K562 (cell line): ENCODE measurements at regions of chr1 and their contacts with region 1.

Region 1: GRCh38 chr1:109112652-109113285 is 1.1 kb upstream of the ELAPOR1 start:
- DNase-seq: peak; percentile 93 to 97 (median 96)
- ATAC-seq: peak; percentile 98
- H3K4me3 ChIP-seq: no peak overlapping the region
- H3K27ac ChIP-seq: no peak overlapping the region
- H3K4me1 ChIP-seq: peaks cover 10 to 20% of the 10 kb centered on the region in 2 experiments; a peak in 4 of 5 replicates
- H3K27me3 ChIP-seq: peaks cover 0 to 6% of the 10 kb centered on the region in 2 experiments; a peak in 1 of 5 replicates
- CTCF ChIP-seq: peak; percentile 96 to 99 (median 97)
- EP300 ChIP-seq: no peak
- POLR2A ChIP-seq: no peak
- RAD21 ChIP-seq: peak; percentile 78 to 88

Region 2: DNA sequence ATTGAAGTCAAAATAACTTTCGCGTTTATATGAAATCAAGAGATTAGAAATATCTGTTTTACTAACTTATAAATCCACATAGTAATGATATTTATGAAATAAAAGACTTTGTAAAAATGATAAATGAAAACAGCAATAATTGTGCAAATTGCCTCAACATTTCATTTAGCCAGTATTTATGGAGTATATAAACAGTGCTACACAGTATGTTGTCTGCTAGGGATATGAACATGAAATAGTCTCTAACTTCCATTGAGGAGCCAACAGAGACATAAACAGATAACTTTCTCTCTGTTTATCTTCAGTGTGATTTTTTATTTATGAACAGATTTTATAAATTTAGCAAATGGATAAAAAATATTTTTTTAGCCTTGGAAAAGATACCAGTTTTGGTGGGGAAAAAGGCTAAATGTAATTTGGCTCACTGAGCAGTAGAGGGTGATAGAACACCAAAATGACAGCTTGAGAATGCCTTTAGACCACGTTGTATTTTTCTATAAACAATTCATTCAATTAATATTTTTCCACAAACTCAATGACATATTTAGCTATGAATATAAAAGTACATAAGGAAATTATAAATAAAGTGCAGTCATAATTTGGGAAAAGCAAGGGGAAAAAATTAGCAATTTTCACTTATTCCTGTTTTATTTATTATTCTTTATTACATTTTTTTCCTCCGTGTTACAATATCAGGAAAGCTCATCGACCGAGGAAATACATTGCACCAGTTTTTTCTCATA is 600.4 kb before region 1 on chr1:
- CTCF ChIA-PET with region 1: interaction called, 9 read pairs
- POLR2A ChIA-PET with region 1: no interaction called
- in situ Hi-C with region 1: no loop called
- intact Hi-C with region 1: loop called (anchors 5 kb)
- DNase-seq: peak; percentile 31 to 68 (median 48)
- ATAC-seq: peak; percentile 87
- H3K4me3 ChIP-seq: no peak overlapping the region
- H3K27ac ChIP-seq: no peak overlapping the region
- H3K4me1 ChIP-seq: no peaks in the 10 kb centered on the region
- H3K27me3 ChIP-seq: no peaks in the 10 kb centered on the region
- CTCF ChIP-seq: peak; percentile 77 to 99 (median 81)
- EP300 ChIP-seq: no peak
- POLR2A ChIP-seq: no peak
- RAD21 ChIP-seq: peak; percentile 100

Region 3: GRCh38 chr1:108897865-108898720 is 214.7 kb before region 1 on chr1:
- CTCF ChIA-PET with region 1: interaction called, 8 read pairs
- POLR2A ChIA-PET with region 1: interaction called, 3 read pairs
- in situ Hi-C with region 1: no loop called
- intact Hi-C with region 1: loop called (anchors 2 kb)
- DNase-seq: peak in 2 of 4 experiments; percentile 56 to 72
- ATAC-seq: peak; percentile 91
- H3K4me3 ChIP-seq: no peak overlapping the region
- H3K27ac ChIP-seq: no peak overlapping the region
- H3K4me1 ChIP-seq: no peaks in the 10 kb centered on the region
- H3K27me3 ChIP-seq: no peaks in the 10 kb centered on the region
- CTCF ChIP-seq: peak; percentile 61 to 94 (median 67); a peak in 5 of 6 replicates
- EP300 ChIP-seq: no peak
- POLR2A ChIP-seq: no peak
- RAD21 ChIP-seq: peak; percentile 89 to 96

Region 4: GRCh38 chr1:108925920-108926319 is 186.8 kb before region 1 on chr1:
- CTCF ChIA-PET with region 1: no interaction called
- POLR2A ChIA-PET with region 1: no interaction called
- in situ Hi-C with region 1: no loop called
- intact Hi-C with region 1: no loop called
- DNase-seq: no peak
- ATAC-seq: no peak
- H3K4me3 ChIP-seq: no peak overlapping the region
- H3K27ac ChIP-seq: no peak overlapping the region
- H3K4me1 ChIP-seq: no peaks in the 10 kb centered on the region
- H3K27me3 ChIP-seq: no peaks in the 10 kb centered on the region
- CTCF ChIP-seq: no peak
- EP300 ChIP-seq: no peak
- POLR2A ChIP-seq: no peak
- RAD21 ChIP-seq: no peak

Region 5: GRCh38 chr1:109041621-109042468 is 70.9 kb before region 1 on chr1 and contains the start of gene WDR47:
- CTCF ChIA-PET with region 1: interaction called, 3 read pairs
- POLR2A ChIA-PET with region 1: no interaction called
- in situ Hi-C with region 1: no loop called
- intact Hi-C with region 1: loop called (anchors 5 kb)
- DNase-seq: peak; percentile 99
- ATAC-seq: peak; percentile 99
- H3K4me3 ChIP-seq: peak within 1 kb of the TSS; percentile 87
- H3K27ac ChIP-seq: peak within 1 kb of the TSS; percentile 63
- H3K4me1 ChIP-seq: peaks cover 8 to 12% of the 10 kb centered on the region in 2 experiments; a peak in 4 of 5 replicates
- H3K27me3 ChIP-seq: no peaks in the 10 kb centered on the region
- CTCF ChIP-seq: no peak
- EP300 ChIP-seq: no peak
- POLR2A ChIP-seq: peak; percentile 87
- RAD21 ChIP-seq: no peak
- polyA plus RNA-seq, gene WDR47: 1.3 to 2.0 TPM

Region 6: GRCh38 chr1:109193653-109194590 is 81.2 kb after region 1 on chr1:
- CTCF ChIA-PET with region 1: interaction called, 3 read pairs
- POLR2A ChIA-PET with region 1: interaction called, 4 read pairs
- in situ Hi-C with region 1: no loop called
- intact Hi-C with region 1: loop called (anchors 1 kb)
- DNase-seq: peak; percentile 83 to 87 (median 84)
- ATAC-seq: peak; percentile 69
- H3K4me3 ChIP-seq: no peak overlapping the region
- H3K27ac ChIP-seq: no peak overlapping the region
- H3K4me1 ChIP-seq: peaks cover 19 to 50% of the 10 kb centered on the region in 2 experiments
- H3K27me3 ChIP-seq: no peaks in the 10 kb centered on the region
- CTCF ChIP-seq: peak; percentile 93 to 98 (median 94)
- EP300 ChIP-seq: no peak
- POLR2A ChIP-seq: no peak
- RAD21 ChIP-seq: peak; percentile 86 to 89

Region 7: DNA sequence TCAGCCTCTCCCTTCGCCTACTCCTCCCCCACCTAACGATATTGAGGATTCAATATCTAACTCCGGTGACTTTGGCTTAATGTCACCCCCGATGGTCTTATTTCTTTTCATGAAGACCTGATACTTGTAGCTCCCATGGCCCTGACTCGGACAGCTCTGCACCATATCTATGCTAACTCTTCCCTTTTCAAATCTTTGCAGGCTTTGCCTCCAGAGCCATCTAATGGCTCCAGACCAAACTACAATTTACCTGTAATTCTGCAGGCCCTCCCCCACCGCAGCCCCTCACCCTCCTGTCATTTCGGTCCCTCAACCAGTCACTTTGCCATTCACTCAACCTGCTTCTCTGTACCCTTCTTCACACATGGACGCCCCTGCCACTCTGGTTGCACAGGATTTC is 591.4 kb after region 1 on chr1:
- CTCF ChIA-PET with region 1: no interaction called
- POLR2A ChIA-PET with region 1: no interaction called
- in situ Hi-C with region 1: no loop called
- intact Hi-C with region 1: no loop called
- DNase-seq: peak; percentile 2 to 11 (median 6)
- ATAC-seq: no peak
- H3K4me3 ChIP-seq: no peak overlapping the region
- H3K27ac ChIP-seq: no peak overlapping the region
- H3K4me1 ChIP-seq: no peaks in the 10 kb centered on the region
- H3K27me3 ChIP-seq: peaks cover 0 to 8% of the 10 kb centered on the region in 2 experiments; a peak in 2 of 5 replicates
- CTCF ChIP-seq: peak in 2 of 3 experiments; percentile 10 to 44; a peak in 2 of 6 replicates
- EP300 ChIP-seq: no peak
- POLR2A ChIP-seq: no peak
- RAD21 ChIP-seq: peak in 1 of 2 experiments; percentile 25; a peak in 1 of 4 replicates